ENCODE measurements at regions of chr2 and their contacts with region 1.

Region 1: DNA sequence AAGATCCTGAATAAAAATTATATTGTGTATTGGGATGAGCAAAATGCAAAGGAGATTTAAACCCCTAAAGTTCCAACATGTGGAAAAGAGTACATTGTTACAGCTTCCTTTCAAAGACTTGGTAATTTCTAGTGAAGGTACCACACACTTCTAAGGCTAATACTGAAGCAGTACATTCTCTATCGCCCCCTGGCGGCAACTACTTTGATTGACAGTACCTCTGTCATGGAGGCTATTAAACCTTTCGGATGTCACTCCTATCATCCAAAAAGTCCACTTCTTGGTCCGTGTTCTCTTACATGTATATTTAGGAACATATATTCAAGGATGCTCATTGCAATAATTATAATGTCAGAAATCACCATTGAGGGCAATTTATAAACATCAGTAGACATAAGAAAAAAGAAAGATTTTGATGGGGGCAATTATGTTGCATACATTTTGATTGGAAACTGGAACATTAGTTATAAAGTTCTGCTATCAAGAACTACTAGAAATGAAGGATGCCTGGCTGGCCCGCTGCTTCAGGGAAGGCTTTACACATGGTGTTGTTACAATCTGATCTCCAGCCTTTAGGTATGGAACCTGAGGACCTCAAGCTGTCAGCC is 601.6 kb downstream of the CPS1 start:
- DNase-seq: no peak

Region 2: DNA sequence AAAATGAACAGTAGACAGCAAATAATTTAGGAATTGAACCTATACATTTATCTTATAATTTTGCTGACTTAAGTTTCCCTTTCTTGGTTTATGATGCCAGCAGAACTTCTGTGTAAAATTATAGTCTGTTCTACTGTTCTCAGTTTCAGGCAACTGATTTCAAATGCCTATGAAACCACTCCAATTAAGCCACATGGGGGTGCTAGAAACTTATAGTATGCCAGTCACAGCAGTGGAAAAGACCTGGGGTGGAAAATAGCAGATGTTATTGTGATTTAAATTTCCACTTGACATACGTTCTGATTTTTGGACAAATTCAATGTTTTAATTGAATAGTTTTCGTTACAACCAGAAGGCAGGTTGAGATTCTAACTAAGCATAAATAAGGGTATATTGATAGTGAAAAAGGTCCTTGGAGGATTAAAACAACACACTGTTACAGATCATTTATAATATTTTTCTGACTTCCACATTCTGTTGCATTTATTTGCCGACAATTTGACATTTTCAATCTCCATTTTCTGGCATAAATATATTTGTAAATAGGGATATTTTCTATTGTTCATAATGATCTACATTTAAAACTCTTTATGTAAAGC is 540.1 kb before region 1 on chr2:
- intact Hi-C with region 1: loop called (anchors 5 kb)
- DNase-seq: no peak

Measured in cardiac septum (tissue), 1 donor.